Left cardiac atrium (tissue), 4 donors: ENCODE measurements at regions of chr17 and their contacts with region 1.

Region 1: DNA sequence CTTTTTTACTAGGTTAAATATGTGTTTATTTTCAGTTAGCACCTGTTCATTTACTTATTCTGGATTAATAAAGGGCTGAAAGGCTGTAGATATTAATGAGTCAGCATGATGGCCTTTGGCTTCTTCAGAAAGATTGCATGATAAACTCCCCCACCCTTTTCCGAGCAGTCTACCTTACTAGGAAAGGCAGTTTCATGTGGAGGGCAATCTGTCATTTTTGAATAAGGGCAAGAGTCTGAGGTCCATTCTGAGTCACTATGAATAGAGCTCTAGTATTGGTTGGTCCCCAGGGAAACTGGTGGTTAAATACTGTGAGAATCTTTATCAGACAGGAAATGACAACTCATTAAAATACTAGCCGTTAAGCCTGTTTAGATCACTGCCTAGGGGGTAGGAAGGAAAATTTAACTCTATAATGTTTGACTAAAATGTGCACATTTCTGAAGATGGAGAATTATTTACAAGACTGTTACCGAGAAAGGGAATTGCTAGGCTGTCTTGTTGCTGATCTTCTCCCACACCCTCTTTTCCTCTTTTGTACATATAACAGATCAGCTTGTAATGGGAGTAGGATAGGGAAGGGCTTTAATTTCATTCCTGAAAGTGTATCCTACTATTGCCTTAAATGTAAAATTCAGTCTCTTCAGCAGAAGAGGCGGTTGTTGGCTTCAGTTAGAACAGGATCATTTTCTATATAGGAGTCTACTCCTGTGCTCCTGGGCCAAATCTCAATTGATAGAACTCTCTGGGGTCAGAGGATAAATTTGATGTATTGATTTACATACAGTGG is 63.3 kb downstream of the TUBD1 start:
- DNase-seq: no peak
- ATAC-seq: peak; percentile 88 to 94

Region 2: DNA sequence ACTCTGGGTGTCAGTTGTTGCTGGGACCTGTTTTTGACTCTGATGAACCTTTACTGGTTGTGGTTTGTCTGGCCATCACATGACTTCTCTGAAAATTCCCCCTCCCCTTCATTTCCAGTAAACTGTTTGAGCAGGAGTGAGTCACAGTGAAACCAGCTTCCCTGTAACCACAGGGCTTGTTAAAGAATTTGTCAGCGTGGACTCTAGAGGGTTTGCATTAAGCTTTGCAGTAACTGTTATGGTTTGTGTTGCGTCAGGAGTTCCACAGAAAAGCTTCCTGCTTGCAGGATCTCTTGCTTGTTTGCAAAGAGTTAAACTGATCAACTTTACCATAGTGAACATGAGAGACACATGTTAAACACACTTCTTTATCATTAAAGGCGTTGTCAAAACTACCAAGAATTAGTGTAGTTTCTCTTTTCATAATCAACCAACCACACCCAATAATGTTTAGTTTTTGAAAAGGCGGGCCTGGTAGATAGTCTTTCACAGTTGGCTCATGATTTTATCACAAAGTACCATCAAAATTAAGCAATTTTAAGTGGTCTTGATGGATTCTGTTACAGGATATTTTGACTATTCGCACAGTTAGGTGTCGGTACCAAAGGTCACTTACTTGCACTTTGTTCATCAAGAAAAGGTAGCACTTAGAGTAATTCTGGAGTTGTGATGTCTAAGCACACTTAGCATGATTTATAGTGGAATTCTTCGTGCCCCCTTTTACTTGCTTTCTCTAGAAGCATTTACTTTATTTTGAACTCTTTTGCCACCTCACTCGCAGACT is 42.7 kb before region 1 on chr17:
- intact Hi-C with region 1: loop called in 1 of 2 experiments (anchors 5 kb)
- DNase-seq: peak; percentile 49
- ATAC-seq: peak; percentile 91 to 95